ENCODE measurements at regions of chr4 and their contacts with region 1.

Region 1: GRCh38 chr4:153466081-153466948 is at the start of gene TMEM131L:
- DNase-seq: peak; percentile 72
- H3K4me3 Mint-ChIP-seq: peak within 1 kb of the TSS; percentile 84
- H3K27ac Mint-ChIP-seq: peak within 1 kb of the TSS; percentile 81
- H3K4me1 Mint-ChIP-seq: peaks cover 49% of the 10 kb centered on the region
- H3K27me3 Mint-ChIP-seq: peaks cover 2% of the 10 kb centered on the region
- total RNA-seq, gene TMEM131L: 25.2 to 26.3 TPM

Region 2: GRCh38 chr4:153432968-153433753 is 33.2 kb before region 1 on chr4:
- CTCF ChIA-PET with region 1: interaction called, 56 read pairs
- POLR2A ChIA-PET with region 1: interaction called, 38 read pairs
- DNase-seq: peak; percentile 86
- H3K4me3 Mint-ChIP-seq: peak overlapping the region; percentile 78
- H3K27ac Mint-ChIP-seq: peak overlapping the region; percentile 90
- H3K4me1 Mint-ChIP-seq: peaks cover 44% of the 10 kb centered on the region
- H3K27me3 Mint-ChIP-seq: peaks cover 3% of the 10 kb centered on the region

Region 3: DNA sequence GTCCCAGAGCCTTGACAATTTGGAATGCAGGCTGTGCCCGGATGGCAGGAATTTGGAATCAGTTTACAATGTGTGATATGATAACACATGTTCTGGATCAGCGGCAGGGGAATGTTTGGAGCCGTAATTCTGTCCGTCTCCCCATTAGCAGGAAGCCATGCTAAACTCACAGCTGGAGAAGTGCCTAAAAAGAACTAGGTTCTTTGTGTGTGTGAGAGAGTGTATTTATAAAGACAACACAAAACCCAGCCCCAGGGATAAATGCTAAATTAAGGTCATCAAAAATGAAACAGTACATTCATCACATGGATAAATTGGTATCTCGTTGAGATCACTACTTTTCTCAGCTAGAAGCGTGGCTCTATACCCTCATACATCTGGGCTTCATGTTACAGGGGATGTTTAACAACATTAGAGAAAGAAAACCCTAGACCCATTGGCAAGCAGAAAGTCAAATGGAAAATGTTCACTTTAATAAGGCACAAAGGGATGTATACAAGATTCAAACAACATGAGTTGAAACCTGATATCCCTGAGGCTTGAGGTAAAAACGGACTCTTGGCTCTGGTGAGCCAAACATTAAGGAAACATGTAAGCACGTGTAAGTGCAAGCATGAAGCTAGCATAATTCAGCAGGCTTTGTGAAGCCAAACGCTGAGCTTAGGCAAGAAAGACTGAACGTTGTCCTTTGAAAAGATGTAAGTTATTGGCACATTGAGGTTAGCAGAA is 18.1 kb before region 1 on chr4:
- CTCF ChIA-PET with region 1: interaction called, 4 read pairs
- POLR2A ChIA-PET with region 1: interaction called, 23 read pairs
- DNase-seq: no peak
- H3K4me3 Mint-ChIP-seq: no peak overlapping the region
- H3K27ac Mint-ChIP-seq: no peak overlapping the region
- H3K4me1 Mint-ChIP-seq: peaks cover 22% of the 10 kb centered on the region
- H3K27me3 Mint-ChIP-seq: peaks cover 3% of the 10 kb centered on the region

Region 4: DNA sequence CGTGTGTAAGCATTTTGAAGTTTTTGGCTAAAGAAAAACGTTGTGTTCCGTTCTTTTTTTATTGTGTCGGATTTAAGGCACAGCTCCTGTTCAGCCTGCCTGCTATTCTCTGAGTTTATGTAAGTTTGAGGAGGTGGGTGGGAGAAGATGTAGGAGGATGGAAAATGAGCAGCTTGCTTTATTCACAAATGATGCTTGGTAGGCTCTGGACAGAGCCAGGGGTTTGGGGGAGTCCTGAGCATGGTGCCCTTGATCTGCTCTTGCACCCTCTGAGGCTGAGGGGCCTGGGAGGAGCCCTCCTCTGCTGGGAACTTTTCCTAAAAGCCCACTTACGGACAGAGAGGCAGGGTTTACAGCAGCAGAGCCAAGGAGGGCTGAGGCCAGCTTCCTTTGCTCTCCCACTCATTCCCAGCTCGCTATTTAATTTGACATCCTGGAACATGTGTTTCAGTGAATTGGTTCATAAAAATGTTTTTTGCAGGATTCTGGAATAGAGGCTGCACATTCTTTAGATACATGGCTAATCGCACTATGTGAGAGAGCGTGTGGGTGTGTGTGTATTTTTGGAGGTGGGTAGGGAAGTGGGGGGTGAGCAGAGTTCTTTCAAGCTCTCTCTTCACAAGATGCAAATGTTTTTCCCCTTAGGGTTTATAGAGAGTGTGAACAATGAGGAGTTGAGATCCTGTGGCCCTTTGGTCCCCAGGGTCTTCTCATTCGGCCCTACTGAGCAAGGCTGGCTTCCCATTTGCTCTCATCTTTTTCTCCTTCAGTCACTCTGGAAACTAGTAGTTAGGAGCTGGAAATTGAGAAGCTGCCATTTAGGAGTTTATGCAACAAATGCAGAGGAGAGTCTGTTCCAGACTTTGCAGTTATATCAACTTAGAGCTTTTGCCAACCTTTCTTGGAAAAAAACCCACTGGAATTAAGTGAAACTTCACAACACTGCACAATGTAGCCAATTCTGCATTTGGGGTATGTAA is 32.0 kb after region 1 on chr4:
- CTCF ChIA-PET with region 1: interaction called, 21 read pairs
- POLR2A ChIA-PET with region 1: interaction called, 60 read pairs
- DNase-seq: no peak
- H3K4me3 Mint-ChIP-seq: peak overlapping the region; percentile 60
- H3K27ac Mint-ChIP-seq: peak overlapping the region; percentile 91
- H3K4me1 Mint-ChIP-seq: peaks cover 81% of the 10 kb centered on the region
- H3K27me3 Mint-ChIP-seq: no peaks in the 10 kb centered on the region

Region 5: GRCh38 chr4:153528705-153529485 is 62.6 kb after region 1 on chr4:
- CTCF ChIA-PET with region 1: interaction called, 16 read pairs
- POLR2A ChIA-PET with region 1: interaction called, 99 read pairs
- DNase-seq: no peak
- H3K4me3 Mint-ChIP-seq: peak overlapping the region; percentile 54
- H3K27ac Mint-ChIP-seq: peak overlapping the region; percentile 81
- H3K4me1 Mint-ChIP-seq: peaks cover 78% of the 10 kb centered on the region
- H3K27me3 Mint-ChIP-seq: no peaks in the 10 kb centered on the region

Region 6: GRCh38 chr4:153560908-153561307 is 94.6 kb after region 1 on chr4:
- CTCF ChIA-PET with region 1: no interaction called
- POLR2A ChIA-PET with region 1: no interaction called
- DNase-seq: no peak
- H3K4me3 Mint-ChIP-seq: no peak overlapping the region
- H3K27ac Mint-ChIP-seq: no peak overlapping the region
- H3K4me1 Mint-ChIP-seq: peaks cover 16% of the 10 kb centered on the region
- H3K27me3 Mint-ChIP-seq: no peaks in the 10 kb centered on the region